ENCODE measurements at regions of chr9 and their contacts with region 1.

Region 1: GRCh38 chr9:73200694-73201452 is 49.2 kb downstream of the ANXA1 start:
- DNase-seq: no peak
- ATAC-seq: no peak
- H3K4me3 ChIP-seq: no peak overlapping the region
- H3K27ac ChIP-seq: no peak overlapping the region
- H3K4me1 ChIP-seq: no peaks in the 10 kb centered on the region
- H3K27me3 ChIP-seq: no peaks in the 10 kb centered on the region
- CTCF ChIP-seq: peak in 2 of 5 experiments; percentile 12 to 45
- POLR2A ChIP-seq: no peak

Region 2: GRCh38 chr9:74570879-74571512 is 1370.1 kb after region 1 on chr9:
- in situ Hi-C with region 1: loop called in 1 of 4 experiments (anchors 25 kb)
- intact Hi-C with region 1: no loop called
- DNase-seq: no peak
- ATAC-seq: no peak
- H3K4me3 ChIP-seq: no peak overlapping the region
- H3K27ac ChIP-seq: no peak overlapping the region
- H3K4me1 ChIP-seq: no peaks in the 10 kb centered on the region
- H3K27me3 ChIP-seq: no peaks in the 10 kb centered on the region
- CTCF ChIP-seq: peak in 3 of 5 experiments; percentile 20 to 57 (median 36)
- POLR2A ChIP-seq: no peak